K562 (cell line): ENCODE measurements at regions of chrX and their contacts with region 1.

Region 1: GRCh38 chrX:133655275-133656265 is 240.3 kb upstream of the GPC4 start:
- DNase-seq: no peak
- ATAC-seq: no peak
- H3K4me3 ChIP-seq: no peak overlapping the region
- H3K27ac ChIP-seq: no peak overlapping the region
- H3K4me1 ChIP-seq: no peaks in the 10 kb centered on the region
- H3K27me3 ChIP-seq: no peaks in the 10 kb centered on the region
- CTCF ChIP-seq: no peak
- EP300 ChIP-seq: no peak
- POLR2A ChIP-seq: no peak
- RAD21 ChIP-seq: no peak

Region 2: DNA sequence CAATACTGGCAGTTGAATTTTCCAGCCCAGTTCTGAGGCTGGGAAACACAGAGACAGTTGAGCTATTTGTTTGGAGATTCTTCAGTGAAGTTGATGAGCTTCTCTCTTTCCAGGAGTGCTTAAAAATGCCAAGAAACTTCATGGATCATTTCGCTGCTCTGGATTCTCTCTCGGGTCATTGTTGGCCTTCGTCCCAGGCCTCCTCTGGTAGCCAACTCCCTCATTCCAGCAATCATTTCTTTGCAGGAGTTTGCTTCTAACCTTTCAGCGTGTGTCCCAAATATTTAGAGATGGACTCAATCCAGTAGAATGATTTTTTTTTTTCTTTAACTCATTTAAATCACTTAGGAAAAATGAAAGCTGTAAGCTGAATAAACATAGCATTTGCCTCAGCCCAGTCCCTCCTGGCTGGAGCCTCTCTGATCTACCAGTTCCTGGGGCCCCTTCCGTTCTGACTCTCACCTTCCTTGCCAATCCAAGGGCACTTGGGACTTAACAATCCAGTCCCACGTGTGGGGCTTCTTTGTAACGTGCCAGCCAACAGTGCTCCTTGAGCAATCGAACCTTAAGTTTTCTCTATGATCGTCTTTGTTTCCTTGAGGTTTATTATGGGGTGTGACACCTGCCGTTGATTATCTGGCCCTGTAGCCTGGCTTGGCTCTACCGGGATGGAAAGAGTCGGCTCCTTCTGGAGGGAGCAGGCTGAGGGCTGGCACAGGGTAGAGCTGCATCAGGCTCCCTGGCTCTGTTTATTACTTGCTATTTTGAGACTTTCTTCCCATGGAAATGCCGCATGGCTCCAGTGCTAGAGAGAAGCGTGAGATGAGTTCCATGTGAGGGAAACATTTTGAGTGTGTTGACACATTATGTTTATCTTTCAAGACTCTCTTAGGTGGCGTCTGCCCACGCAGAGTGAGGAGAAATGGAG is 159.8 kb before region 1 on chrX:
- CTCF ChIA-PET with region 1: no interaction called
- POLR2A ChIA-PET with region 1: no interaction called
- in situ Hi-C with region 1: no loop called
- intact Hi-C with region 1: loop called (anchors 10 kb)
- DNase-seq: no peak
- ATAC-seq: no peak
- H3K4me3 ChIP-seq: no peak overlapping the region
- H3K27ac ChIP-seq: no peak overlapping the region
- H3K4me1 ChIP-seq: no peaks in the 10 kb centered on the region
- H3K27me3 ChIP-seq: no peaks in the 10 kb centered on the region
- CTCF ChIP-seq: no peak
- EP300 ChIP-seq: no peak
- POLR2A ChIP-seq: no peak
- RAD21 ChIP-seq: no peak

Region 3: GRCh38 chrX:133640161-133641015 is 15.2 kb before region 1 on chrX:
- CTCF ChIA-PET with region 1: no interaction called
- POLR2A ChIA-PET with region 1: no interaction called
- in situ Hi-C with region 1: no loop called
- intact Hi-C with region 1: no loop called
- DNase-seq: no peak
- ATAC-seq: no peak
- H3K4me3 ChIP-seq: no peak overlapping the region
- H3K27ac ChIP-seq: no peak overlapping the region
- H3K4me1 ChIP-seq: no peaks in the 10 kb centered on the region
- H3K27me3 ChIP-seq: no peaks in the 10 kb centered on the region
- CTCF ChIP-seq: no peak
- EP300 ChIP-seq: no peak
- POLR2A ChIP-seq: no peak
- RAD21 ChIP-seq: no peak